B cell (primary cell): ENCODE measurements at regions of chr11 and their contacts with region 1.

Region 1: DNA sequence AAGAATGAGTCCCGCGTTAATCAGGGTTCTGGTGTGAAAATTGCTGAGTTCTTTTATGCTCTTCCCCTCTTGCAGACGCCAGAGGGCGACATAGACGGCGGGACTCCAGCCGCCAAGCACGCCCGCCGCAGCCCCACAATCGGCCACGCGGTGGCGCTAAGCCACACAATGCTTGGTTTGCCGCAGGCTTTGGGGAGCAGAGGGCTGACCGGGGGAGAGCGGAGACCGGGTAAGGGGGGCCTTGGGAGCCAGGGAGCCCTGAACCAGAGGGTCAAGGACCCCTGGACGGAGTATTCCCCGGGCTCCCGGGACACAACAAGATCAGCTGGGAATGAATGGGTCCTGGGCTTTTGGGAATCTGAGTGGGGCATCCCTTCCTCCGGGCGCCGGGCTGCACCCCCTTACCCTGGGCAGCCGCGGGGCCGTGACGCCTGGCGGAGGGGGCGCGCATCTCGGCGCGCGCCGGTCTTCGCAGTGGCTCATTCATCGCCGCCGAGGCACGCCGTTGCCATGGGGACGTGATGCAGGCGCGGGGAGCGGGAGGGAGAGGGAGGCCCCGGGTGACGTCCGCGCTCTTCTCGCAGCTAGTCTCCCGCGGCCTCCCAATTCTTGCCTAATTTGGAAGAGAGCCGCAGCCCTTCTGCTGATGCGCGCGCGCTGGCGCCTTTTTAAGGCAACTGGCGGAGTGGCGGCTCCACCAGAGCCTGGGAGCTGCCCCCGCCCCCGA is 12.2 kb upstream of the NPAS4 start:
- DNase-seq: peak; percentile 93
- ATAC-seq: peak; percentile 96
- H3K4me3 ChIP-seq: peak overlapping the region in 4 of 5 experiments; percentile 5 to 57 (median 27)
- H3K4me3 Mint-ChIP-seq: peak overlapping the region; percentile 79
- H3K27ac ChIP-seq: no peak overlapping the region
- H3K27ac Mint-ChIP-seq: no peak overlapping the region
- H3K4me1 ChIP-seq: peaks cover 5 to 6% of the 10 kb centered on the region in 2 donors
- H3K4me1 Mint-ChIP-seq: peaks cover 4% of the 10 kb centered on the region
- H3K27me3 ChIP-seq: peaks cover 0 to 49% (median 12%) of the 10 kb centered on the region in 4 experiments
- H3K27me3 Mint-ChIP-seq: peaks cover 53% of the 10 kb centered on the region
- CTCF ChIP-seq: peak; percentile 100

Region 2: DNA sequence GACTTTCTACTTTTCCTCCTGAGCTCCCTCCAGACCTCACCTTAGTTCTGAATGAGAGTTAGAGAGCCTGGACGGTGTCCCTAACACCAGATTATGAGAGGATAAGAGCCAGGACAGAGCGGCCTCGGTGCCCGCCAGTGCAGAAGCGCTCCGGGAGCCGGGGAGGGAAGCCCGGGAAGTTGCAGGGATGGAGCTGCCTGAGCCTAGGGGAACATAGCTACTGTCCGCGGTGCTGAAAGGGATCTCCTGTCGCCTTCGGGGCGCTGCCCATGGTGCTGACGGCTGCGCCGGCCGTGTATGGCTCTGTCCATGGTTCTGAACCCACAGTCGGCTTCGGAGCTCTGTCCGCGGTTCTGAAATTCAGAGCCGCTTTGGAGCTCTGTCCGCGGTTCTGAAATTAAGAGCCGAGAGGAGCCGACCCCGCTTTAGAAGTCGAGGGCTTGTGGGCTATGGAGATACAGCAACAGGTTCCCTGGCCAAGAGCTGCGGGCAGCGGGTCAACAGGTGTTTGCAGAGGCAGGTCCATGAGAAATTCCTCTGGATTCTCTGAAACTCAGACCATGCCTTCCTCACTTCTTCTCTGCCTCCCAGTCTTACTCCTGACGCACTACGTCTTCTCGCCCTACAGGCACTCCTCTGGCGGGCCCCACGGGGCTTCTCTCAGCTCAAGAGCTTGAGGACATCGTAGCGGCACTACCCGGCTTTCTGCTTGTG is 13.0 kb after region 1 on chr11:
- CTCF ChIA-PET with region 1: interaction called, 15 read pairs
- POLR2A ChIA-PET with region 1: no interaction called
- intact Hi-C with region 1: no loop called
- DNase-seq: peak; percentile 92
- ATAC-seq: peak; percentile 95
- H3K4me3 ChIP-seq: no peak overlapping the region
- H3K4me3 Mint-ChIP-seq: no peak overlapping the region
- H3K27ac ChIP-seq: no peak overlapping the region
- H3K27ac Mint-ChIP-seq: peak overlapping the region; percentile 81
- H3K4me1 ChIP-seq: peaks cover 8 to 15% of the 10 kb centered on the region in 2 donors
- H3K4me1 Mint-ChIP-seq: peaks cover 3% of the 10 kb centered on the region
- H3K27me3 ChIP-seq: peaks cover 0 to 45% (median 34%) of the 10 kb centered on the region in 4 experiments
- H3K27me3 Mint-ChIP-seq: peaks cover 31% of the 10 kb centered on the region
- CTCF ChIP-seq: no peak

Region 3: GRCh38 chr11:66438504-66439466 is 30.1 kb after region 1 on chr11 and contains the start of gene MRPL11:
- CTCF ChIA-PET with region 1: interaction called, 12 read pairs
- POLR2A ChIA-PET with region 1: no interaction called
- intact Hi-C with region 1: loop called (anchors 1 kb)
- DNase-seq: peak; percentile 95
- ATAC-seq: peak; percentile 98
- H3K4me3 ChIP-seq: peak within 1 kb of the TSS; percentile 71 to 98 (median 78)
- H3K4me3 Mint-ChIP-seq: peak within 1 kb of the TSS; percentile 93
- H3K27ac ChIP-seq: peak within 1 kb of the TSS; percentile 76 to 79
- H3K27ac Mint-ChIP-seq: peak within 1 kb of the TSS; percentile 98
- H3K4me1 ChIP-seq: peaks cover 6 to 10% of the 10 kb centered on the region in 2 donors
- H3K4me1 Mint-ChIP-seq: peaks cover 14% of the 10 kb centered on the region
- H3K27me3 ChIP-seq: no peaks in the 10 kb centered on the region
- H3K27me3 Mint-ChIP-seq: no peaks in the 10 kb centered on the region
- CTCF ChIP-seq: peak; percentile 77
- total RNA-seq, gene MRPL11: 26.7 and 29.2 TPM in 2 replicates

Region 4: GRCh38 chr11:66579017-66579606 is 170.5 kb after region 1 on chr11:
- CTCF ChIA-PET with region 1: no interaction called
- POLR2A ChIA-PET with region 1: no interaction called
- intact Hi-C with region 1: loop called (anchors 2 kb)
- DNase-seq: peak; percentile 85
- ATAC-seq: peak; percentile 91
- H3K4me3 ChIP-seq: peak overlapping the region in 2 of 5 experiments; percentile 1 to 12
- H3K4me3 Mint-ChIP-seq: peak overlapping the region; percentile 18
- H3K27ac ChIP-seq: no peak overlapping the region
- H3K27ac Mint-ChIP-seq: no peak overlapping the region
- H3K4me1 ChIP-seq: peaks cover 3 to 7% of the 10 kb centered on the region in 2 donors
- H3K4me1 Mint-ChIP-seq: peaks cover 8% of the 10 kb centered on the region
- H3K27me3 ChIP-seq: no peaks in the 10 kb centered on the region
- H3K27me3 Mint-ChIP-seq: peaks cover 24% of the 10 kb centered on the region
- CTCF ChIP-seq: peak; percentile 84

Region 5: GRCh38 chr11:66835768-66836405 is 427.2 kb after region 1 on chr11:
- CTCF ChIA-PET with region 1: interaction called, 8 read pairs
- POLR2A ChIA-PET with region 1: no interaction called
- intact Hi-C with region 1: loop called (anchors 1 kb)
- DNase-seq: no peak
- ATAC-seq: no peak
- H3K4me3 ChIP-seq: no peak overlapping the region
- H3K4me3 Mint-ChIP-seq: no peak overlapping the region
- H3K27ac ChIP-seq: no peak overlapping the region
- H3K27ac Mint-ChIP-seq: peak overlapping the region; percentile 15
- H3K4me1 ChIP-seq: peaks cover 6 to 18% of the 10 kb centered on the region in 2 donors
- H3K4me1 Mint-ChIP-seq: peaks cover 32% of the 10 kb centered on the region
- H3K27me3 ChIP-seq: no peaks in the 10 kb centered on the region
- H3K27me3 Mint-ChIP-seq: no peaks in the 10 kb centered on the region
- CTCF ChIP-seq: no peak